Activated CD8-positive, alpha-beta T cell treated with anti-CD3 and anti-CD28 coated beads for 36 hours (primary cell): ENCODE measurements at regions of chr10 and their contacts with region 1.

Region 1: DNA sequence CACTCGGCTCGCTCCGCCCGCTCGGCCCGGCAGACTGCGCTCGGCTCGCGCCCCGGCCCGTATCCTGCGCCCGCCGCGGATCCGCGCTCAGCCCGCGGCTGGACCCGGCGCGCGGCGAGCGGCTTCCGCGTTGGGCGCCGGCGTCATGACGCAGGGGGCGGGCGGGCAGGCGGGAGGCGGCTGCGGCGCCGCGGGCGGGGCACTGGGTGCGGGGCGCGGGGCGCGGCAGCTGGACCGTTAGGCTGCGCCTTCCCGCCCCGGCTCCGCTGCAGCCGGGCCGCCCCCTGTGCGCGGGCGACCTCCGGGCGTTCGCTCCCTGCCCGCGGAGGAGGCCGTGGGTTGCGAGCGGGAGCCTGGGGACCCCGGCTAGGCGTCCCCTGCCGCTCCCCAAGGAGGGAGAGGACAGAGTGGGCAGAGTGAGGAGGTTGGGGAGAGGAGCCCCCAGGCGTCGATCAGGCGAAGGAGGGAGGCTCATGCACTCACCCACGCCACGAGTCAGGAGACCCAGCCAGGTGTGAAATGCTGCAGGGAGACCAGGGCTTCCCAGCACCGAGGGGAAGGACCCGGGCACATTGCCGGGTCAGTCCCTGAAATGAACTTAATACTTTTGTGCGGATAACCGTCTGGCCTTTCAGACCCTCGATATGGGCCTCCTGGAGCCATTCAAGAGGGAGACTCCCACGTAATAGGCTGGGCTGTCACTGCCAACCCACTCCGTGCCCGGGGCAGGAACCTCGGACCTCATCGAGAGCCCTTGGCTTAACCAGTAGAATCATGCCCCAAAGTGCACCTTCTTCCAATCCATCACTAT is at the start of gene PIP4K2A:
- DNase-seq: peak; percentile 75
- ATAC-seq: peak; percentile 82
- H3K4me3 Mint-ChIP-seq: peak within 1 kb of the TSS; percentile 92
- H3K27ac Mint-ChIP-seq: peak within 1 kb of the TSS; percentile 90
- H3K4me1 Mint-ChIP-seq: peaks cover 23% of the 10 kb centered on the region
- H3K27me3 Mint-ChIP-seq: no peaks in the 10 kb centered on the region
- CTCF ChIP-seq: no peak
- total RNA-seq, gene PIP4K2A: 108 to 115 TPM

Region 2: DNA sequence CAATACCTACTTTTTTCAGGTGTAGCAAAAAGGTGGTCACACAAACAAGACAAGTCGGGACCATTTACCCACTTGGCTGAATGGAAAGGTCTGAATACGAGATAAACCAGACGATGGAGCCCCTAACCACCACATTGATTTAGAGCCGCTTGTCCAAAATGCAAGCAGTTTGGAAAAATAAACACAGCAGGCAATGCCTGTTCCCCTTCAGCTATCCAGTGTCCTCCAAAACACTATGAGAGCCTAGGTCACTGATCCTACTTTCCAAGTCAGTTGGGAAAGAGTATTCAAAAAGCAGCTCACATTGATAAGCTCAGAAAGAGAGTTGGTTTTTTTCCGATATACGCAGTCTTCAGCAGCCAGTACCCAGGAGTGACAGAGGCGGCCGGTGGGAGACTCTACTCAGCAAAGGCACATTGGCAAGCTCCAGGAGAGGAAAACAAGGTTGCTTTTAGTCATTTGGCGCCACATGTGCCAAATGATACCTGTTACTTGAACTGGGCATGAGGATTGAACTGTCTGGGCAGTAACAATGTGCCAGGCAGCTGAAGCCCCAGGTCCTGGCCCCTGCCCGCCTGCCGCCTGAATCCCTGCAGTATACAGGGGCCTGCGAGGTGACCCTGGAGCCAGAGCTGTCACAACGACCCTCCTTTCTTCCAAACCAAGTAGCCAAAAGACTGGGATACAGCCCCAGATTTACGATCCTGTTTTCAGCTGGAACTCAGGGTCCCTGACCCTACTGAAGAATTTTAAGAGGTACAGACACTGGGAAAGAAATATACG is 110.1 kb before region 1 on chr10:
- CTCF ChIA-PET with region 1: no interaction called
- POLR2A ChIA-PET with region 1: no interaction called
- intact Hi-C with region 1: loop called (anchors 5 kb)
- DNase-seq: no peak
- ATAC-seq: no peak
- H3K4me3 Mint-ChIP-seq: no peak overlapping the region
- H3K27ac Mint-ChIP-seq: peak overlapping the region; percentile 73
- H3K4me1 Mint-ChIP-seq: peaks cover 87% of the 10 kb centered on the region
- H3K27me3 Mint-ChIP-seq: no peaks in the 10 kb centered on the region
- CTCF ChIP-seq: no peak

Region 3: DNA sequence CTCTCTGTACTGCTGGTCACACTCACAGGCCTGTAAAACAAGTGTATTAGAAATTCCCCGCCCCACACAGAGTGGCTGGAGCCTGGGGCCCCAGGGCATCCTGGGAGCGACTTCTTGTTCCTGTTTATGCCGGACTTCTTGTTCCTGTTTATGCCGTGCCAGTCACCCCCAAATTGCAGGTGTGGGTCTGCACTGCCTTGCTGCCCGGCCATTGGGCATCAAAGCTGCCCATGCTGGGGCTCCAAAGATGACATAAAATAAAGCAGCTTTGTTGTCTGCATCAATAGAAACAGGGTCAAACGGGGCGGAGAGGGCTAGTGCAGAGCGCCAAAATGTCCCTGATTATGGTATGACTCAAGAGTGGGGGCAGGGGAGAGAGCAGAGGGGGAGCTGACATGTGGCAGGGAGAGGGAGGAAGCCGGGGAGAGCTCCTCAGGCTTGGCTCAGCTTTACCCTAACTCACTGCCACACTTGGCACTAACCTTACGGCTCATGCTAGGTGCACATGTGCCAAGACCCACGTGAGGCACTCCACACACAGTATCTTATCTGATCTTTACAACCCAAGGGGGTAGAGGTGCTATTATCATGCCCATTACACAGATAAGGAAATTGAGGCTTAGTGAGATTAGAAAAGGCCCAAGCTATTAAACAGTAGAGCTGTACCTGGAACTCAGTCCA is 98.7 kb before region 1 on chr10:
- CTCF ChIA-PET with region 1: interaction called, 4 read pairs
- POLR2A ChIA-PET with region 1: interaction called, 12 read pairs
- intact Hi-C with region 1: no loop called
- DNase-seq: peak; percentile 62
- ATAC-seq: peak; percentile 43
- H3K4me3 Mint-ChIP-seq: peak overlapping the region; percentile 69
- H3K27ac Mint-ChIP-seq: peak overlapping the region; percentile 91
- H3K4me1 Mint-ChIP-seq: peaks cover 96% of the 10 kb centered on the region
- H3K27me3 Mint-ChIP-seq: no peaks in the 10 kb centered on the region
- CTCF ChIP-seq: no peak

Region 4: GRCh38 chr10:22648547-22648961 is 66.1 kb before region 1 on chr10:
- CTCF ChIA-PET with region 1: interaction called, 5 read pairs
- POLR2A ChIA-PET with region 1: interaction called, 28 read pairs
- intact Hi-C with region 1: loop called (anchors 5 kb)
- DNase-seq: no peak
- ATAC-seq: no peak
- H3K4me3 Mint-ChIP-seq: peak overlapping the region; percentile 69
- H3K27ac Mint-ChIP-seq: peak overlapping the region; percentile 99
- H3K4me1 Mint-ChIP-seq: peaks cover 90% of the 10 kb centered on the region
- H3K27me3 Mint-ChIP-seq: no peaks in the 10 kb centered on the region
- CTCF ChIP-seq: no peak

Region 5: GRCh38 chr10:22666287-22667092 is 48.2 kb before region 1 on chr10:
- CTCF ChIA-PET with region 1: interaction called, 3 read pairs
- POLR2A ChIA-PET with region 1: interaction called, 10 read pairs
- intact Hi-C with region 1: loop called (anchors 5 kb)
- DNase-seq: peak; percentile 80
- ATAC-seq: peak; percentile 79
- H3K4me3 Mint-ChIP-seq: peak overlapping the region; percentile 81
- H3K27ac Mint-ChIP-seq: peak overlapping the region; percentile 93
- H3K4me1 Mint-ChIP-seq: peaks cover 89% of the 10 kb centered on the region
- H3K27me3 Mint-ChIP-seq: no peaks in the 10 kb centered on the region
- CTCF ChIP-seq: no peak

Region 6: GRCh38 chr10:22682237-22683139 is 32.2 kb before region 1 on chr10:
- CTCF ChIA-PET with region 1: no interaction called
- POLR2A ChIA-PET with region 1: interaction called, 40 read pairs
- intact Hi-C with region 1: no loop called
- DNase-seq: peak; percentile 85
- ATAC-seq: peak; percentile 42
- H3K4me3 Mint-ChIP-seq: peak overlapping the region; percentile 59
- H3K27ac Mint-ChIP-seq: peak overlapping the region; percentile 100
- H3K4me1 Mint-ChIP-seq: peaks cover 88% of the 10 kb centered on the region
- H3K27me3 Mint-ChIP-seq: no peaks in the 10 kb centered on the region
- CTCF ChIP-seq: no peak

Region 7: DNA sequence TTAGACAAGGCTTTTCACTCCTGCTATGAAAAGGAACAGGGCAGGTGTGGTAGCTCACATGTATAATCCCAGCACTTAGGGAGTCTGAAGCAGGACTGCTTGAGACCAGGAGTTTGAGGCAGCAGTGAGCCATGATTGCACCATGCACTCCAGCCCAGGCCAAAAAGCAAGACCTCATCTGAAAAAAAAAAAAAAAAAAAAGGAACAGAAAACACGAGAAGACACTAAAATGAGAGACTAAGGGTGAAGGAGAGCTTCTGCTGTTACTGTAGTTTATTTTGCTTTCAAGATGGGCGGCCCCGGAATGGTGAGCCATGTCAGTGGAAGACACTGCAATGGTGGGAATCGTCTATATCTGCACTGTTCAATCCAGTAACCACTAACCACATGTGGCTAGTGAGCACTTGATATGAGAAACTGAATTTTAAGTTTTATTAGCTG is 10.2 kb before region 1 on chr10:
- CTCF ChIA-PET with region 1: interaction called, 4 read pairs
- POLR2A ChIA-PET with region 1: interaction called, 15 read pairs
- intact Hi-C with region 1: no loop called
- DNase-seq: no peak
- ATAC-seq: no peak
- H3K4me3 Mint-ChIP-seq: no peak overlapping the region
- H3K27ac Mint-ChIP-seq: peak overlapping the region; percentile 78
- H3K4me1 Mint-ChIP-seq: peaks cover 94% of the 10 kb centered on the region
- H3K27me3 Mint-ChIP-seq: no peaks in the 10 kb centered on the region
- CTCF ChIP-seq: no peak